ENCODE measurements at regions of chr18 and their contacts with region 1.

Region 1: GRCh38 chr18:13260197-13260934 is 41.8 kb downstream of the LDLRAD4 start:
- DNase-seq: peak; percentile 75
- H3K4me3 ChIP-seq: no peak overlapping the region
- H3K27ac ChIP-seq: peak overlapping the region; percentile 38
- H3K4me1 ChIP-seq: peaks cover 22% of the 10 kb centered on the region
- H3K27me3 ChIP-seq: peaks cover 0 to 5% of the 10 kb centered on the region in 2 experiments
- CTCF ChIP-seq: no peak
- POLR2A ChIP-seq: no peak

Region 2: GRCh38 chr18:12958478-12958877 is 301.9 kb before region 1 on chr18:
- CTCF ChIA-PET with region 1: no interaction called
- POLR2A ChIA-PET with region 1: no interaction called
- dilution Hi-C with region 1: no loop called
- intact Hi-C with region 1: no loop called
- DNase-seq: no peak
- H3K4me3 ChIP-seq: no peak overlapping the region
- H3K27ac ChIP-seq: no peak overlapping the region
- H3K4me1 ChIP-seq: no peaks in the 10 kb centered on the region
- H3K27me3 ChIP-seq: no peaks in the 10 kb centered on the region
- CTCF ChIP-seq: no peak
- POLR2A ChIP-seq: no peak

Region 3: GRCh38 chr18:12975488-12975887 is 284.9 kb before region 1 on chr18:
- CTCF ChIA-PET with region 1: no interaction called
- POLR2A ChIA-PET with region 1: no interaction called
- dilution Hi-C with region 1: no loop called
- intact Hi-C with region 1: no loop called
- DNase-seq: no peak
- H3K4me3 ChIP-seq: no peak overlapping the region
- H3K27ac ChIP-seq: no peak overlapping the region
- H3K4me1 ChIP-seq: no peaks in the 10 kb centered on the region
- H3K27me3 ChIP-seq: no peaks in the 10 kb centered on the region
- CTCF ChIP-seq: no peak
- POLR2A ChIP-seq: no peak

Region 4: DNA sequence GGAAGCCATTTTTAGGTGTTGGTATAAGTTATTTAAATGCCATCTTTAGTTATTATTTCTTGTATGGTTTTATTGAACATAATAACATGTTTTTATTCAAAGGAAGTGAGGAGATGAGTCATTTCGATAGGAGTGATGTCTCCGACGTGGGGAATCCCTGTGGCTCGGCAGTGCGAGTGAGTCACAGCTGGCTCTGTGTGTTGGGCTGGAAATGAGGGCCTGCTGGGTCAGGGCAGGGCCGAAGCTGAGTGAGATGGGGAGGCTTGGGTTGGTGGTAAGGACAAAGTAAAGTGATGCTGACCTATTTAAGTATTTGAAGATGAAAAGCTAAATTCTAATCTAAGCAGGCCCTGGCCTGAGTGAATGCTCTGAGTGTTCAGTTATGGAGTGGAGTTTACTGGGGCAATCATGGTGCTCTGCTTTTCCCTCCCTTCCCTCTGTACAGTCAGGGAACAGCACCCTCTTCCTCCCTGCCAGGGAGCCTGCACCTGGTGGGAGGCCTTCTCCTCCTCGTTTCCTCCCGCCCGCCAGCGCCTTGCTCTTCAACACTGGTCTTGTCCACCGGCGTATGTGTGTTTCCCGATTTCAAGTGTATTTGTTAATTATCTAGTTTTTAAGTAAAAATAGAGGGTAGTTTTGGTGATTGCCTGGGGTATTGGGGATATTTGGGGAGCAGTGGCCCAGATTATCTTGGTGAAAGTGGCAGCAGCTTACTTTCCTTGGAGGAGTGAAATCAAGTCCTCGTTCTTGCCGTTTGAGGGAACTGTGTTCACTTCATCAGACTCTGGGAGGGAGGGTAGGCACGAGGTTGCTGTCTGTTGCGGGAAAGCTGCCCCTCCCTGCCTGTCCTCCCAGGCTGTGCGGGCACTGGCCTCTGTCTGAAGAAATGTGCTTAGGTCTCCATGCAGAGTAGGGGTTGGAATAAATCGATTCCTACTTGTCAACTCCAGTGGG is 115.2 kb after region 1 on chr18:
- CTCF ChIA-PET with region 1: no interaction called
- POLR2A ChIA-PET with region 1: no interaction called
- dilution Hi-C with region 1: no loop called
- intact Hi-C with region 1: loop called (anchors 2 kb)
- DNase-seq: peak; percentile 97
- H3K4me3 ChIP-seq: peak overlapping the region in 1 of 3 experiments; percentile 20
- H3K27ac ChIP-seq: peak overlapping the region; percentile 90
- H3K4me1 ChIP-seq: peaks cover 23% of the 10 kb centered on the region
- H3K27me3 ChIP-seq: no peaks in the 10 kb centered on the region
- CTCF ChIP-seq: no peak
- POLR2A ChIP-seq: no peak

Region 5: GRCh38 chr18:13494871-13495445 is 234.6 kb after region 1 on chr18:
- CTCF ChIA-PET with region 1: no interaction called
- POLR2A ChIA-PET with region 1: no interaction called
- dilution Hi-C with region 1: no loop called
- intact Hi-C with region 1: loop called (anchors 2 kb)
- DNase-seq: peak; percentile 68
- H3K4me3 ChIP-seq: no peak overlapping the region
- H3K27ac ChIP-seq: no peak overlapping the region
- H3K4me1 ChIP-seq: peaks cover 9% of the 10 kb centered on the region
- H3K27me3 ChIP-seq: no peaks in the 10 kb centered on the region
- CTCF ChIP-seq: no peak
- POLR2A ChIP-seq: no peak

Measured in endothelial cell of umbilical vein (primary cell).